Gastrocnemius medialis (tissue), 4 donors: ENCODE measurements at regions of chr17 and their contacts with region 1.

Region 1: GRCh38 chr17:42405963-42406495 is 17.0 kb downstream of the CAVIN1 start:
- DNase-seq: peak; percentile 65 to 82
- ATAC-seq: peak; percentile 36 to 48
- H3K4me3 ChIP-seq: no peak overlapping the region
- H3K27ac ChIP-seq: peak overlapping the region; percentile 89 to 100 (median 95)
- H3K4me1 ChIP-seq: peaks cover 54 to 60% of the 10 kb centered on the region in 2 donors
- H3K27me3 ChIP-seq: no peaks in the 10 kb centered on the region
- CTCF ChIP-seq: peak; percentile 90 to 95 (median 93)
- POLR2A ChIP-seq: no peak

Region 2: DNA sequence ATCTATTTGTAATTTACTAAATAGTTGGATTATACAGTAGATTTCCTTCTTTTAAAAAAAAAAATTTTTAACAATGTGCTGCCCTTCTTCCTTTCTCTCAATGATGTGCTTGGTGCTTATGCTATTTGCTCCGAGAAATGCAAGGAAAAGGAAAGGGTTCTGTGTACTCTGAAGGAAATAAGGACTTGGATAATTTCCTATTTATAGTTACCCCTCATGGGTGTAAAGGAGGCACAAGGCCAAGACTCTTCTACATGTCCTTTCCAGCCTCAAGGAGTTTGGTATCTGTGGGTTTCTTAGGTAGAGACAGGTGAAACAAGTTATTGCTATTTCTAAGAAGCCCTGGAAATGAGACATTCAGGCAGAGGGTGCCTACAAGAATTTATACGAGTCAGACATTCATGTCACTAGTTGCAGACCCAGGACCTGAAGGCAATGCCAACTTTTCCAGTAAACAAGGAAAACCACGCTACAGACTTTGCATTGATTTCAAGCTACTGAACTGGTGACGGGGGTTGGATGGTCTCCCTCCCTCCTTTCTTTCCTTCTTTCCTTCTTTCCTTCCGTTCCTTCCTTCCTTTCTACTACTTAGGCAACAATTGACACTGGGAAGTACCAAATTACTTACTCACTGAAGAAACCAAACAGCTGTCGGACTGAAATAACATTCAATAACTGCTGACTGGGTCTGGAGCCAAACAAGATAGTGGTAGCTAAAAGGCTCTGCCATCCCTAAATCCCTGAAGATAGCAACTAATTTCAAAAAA is 178.0 kb before region 1 on chr17:
- in situ Hi-C with region 1: no loop called
- intact Hi-C with region 1: loop called (anchors 1 kb)
- DNase-seq: peak; percentile 34
- ATAC-seq: peak; percentile 92 to 93
- H3K4me3 ChIP-seq: peak overlapping the region in 3 of 4 donors; percentile 3 to 11 (median 7)
- H3K27ac ChIP-seq: peak overlapping the region; percentile 81 to 88 (median 84)
- H3K4me1 ChIP-seq: peaks cover 33 to 39% of the 10 kb centered on the region in 2 donors
- H3K27me3 ChIP-seq: no peaks in the 10 kb centered on the region
- CTCF ChIP-seq: no peak
- POLR2A ChIP-seq: no peak

Region 3: DNA sequence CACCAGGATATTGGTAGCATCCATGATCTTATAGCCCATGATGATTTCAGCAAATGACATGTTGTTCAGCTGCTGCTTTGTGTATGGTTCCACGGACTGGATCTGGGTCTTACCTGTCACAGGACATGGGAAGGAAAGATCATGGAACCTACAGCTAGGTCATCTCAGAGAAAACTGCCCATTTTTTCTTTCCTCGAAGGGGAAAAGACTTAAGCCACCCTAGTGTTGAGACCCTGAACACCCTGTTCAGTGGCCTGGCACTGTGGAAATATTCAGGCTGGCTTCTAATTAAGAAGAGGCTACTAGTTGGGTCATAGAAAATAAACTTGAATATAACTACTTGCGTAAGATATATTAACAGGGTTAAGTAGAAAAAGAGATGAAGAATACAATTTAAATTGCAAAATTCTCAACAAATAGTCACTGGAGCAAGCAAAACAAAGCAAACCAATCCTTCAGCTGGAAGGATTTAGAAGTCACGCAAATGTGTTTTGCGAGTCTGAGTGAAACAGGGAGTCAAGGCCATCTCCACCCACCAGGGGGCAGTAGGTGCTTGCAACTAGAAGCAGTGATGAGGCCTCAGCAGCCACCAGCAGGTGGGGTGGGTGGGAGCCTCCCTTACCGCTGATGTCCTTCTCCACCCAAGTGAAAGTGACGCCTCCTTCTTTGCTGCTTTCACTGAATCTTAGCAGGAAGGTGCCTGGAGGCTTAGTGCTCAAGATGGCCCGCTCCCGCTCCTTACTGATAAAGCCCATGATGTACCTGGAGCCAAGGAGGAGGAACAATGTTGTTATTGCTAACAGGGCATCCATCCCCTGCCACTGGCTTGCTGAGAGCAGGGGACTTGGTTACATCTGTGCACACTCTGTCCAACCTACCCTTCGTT is 83.4 kb before region 1 on chr17:
- in situ Hi-C with region 1: loop called (anchors 5 kb)
- intact Hi-C with region 1: loop called (anchors 1 kb)
- DNase-seq: peak; percentile 85 to 93
- ATAC-seq: peak; percentile 77 to 79
- H3K4me3 ChIP-seq: no peak overlapping the region
- H3K27ac ChIP-seq: peak overlapping the region; percentile 1 to 49 (median 44)
- H3K4me1 ChIP-seq: peaks cover 8 to 22% of the 10 kb centered on the region in 2 donors
- H3K27me3 ChIP-seq: no peaks in the 10 kb centered on the region
- CTCF ChIP-seq: peak; percentile 98 to 100 (median 99)
- POLR2A ChIP-seq: no peak

Region 4: DNA sequence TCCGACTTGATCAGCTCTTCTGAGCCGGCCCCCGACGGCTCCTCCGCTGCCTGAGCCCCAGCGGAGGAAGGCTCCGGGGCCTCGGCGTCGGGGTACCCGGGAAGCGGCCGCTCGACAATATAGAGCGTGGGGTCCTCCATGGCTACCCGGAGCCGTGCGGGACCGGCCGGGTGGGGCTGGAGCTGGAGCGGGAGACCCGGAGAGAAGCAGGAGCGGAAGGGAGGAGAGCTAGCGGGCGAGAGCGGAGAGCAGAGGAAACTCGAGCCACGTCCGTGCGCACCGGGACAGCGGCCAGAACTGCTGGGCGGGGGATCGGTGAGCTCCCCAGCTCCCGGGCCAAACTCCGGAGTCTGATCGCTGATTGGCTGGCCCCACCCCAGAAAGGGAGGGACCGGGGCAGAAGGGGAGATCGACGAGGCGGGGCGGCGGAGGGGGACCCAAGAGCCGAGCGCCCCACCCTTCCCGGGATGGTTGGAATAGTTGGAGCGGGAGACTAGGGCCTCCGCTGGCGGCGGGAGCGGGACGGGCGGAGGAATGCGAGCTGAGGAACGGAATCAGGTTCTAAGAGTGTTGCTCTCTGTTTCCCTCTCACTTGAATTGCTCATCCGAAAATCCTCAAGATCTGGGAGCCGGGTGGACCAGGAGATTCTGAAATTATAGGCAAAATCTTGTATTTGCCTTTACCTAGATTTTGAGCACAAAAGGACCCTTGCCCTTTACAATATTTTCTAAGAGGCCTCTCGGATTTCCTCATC is 17.1 kb after region 1 on chr17 and contains the start of gene CAVIN1:
- in situ Hi-C with region 1: no loop called
- intact Hi-C with region 1: loop called (anchors 2 kb)
- DNase-seq: peak; percentile 99 to 100
- ATAC-seq: peak; percentile 80 to 88
- H3K4me3 ChIP-seq: peak within 1 kb of the TSS; percentile 87 to 99 (median 95)
- H3K27ac ChIP-seq: peak within 1 kb of the TSS; percentile 96 to 100 (median 98)
- H3K4me1 ChIP-seq: peaks cover 30 to 35% of the 10 kb centered on the region in 2 donors
- H3K27me3 ChIP-seq: no peaks in the 10 kb centered on the region
- CTCF ChIP-seq: peak in 1 of 5 experiments; percentile 8
- POLR2A ChIP-seq: peak; percentile 92 to 95
- total RNA-seq, gene CAVIN1: 64.9 to 137 (median 125) TPM

Region 5: GRCh38 chr17:42517516-42517915 is 111.5 kb after region 1 on chr17:
- in situ Hi-C with region 1: loop called in 1 of 4 experiments (anchors 10 kb)
- intact Hi-C with region 1: loop called (anchors 5 kb)
- DNase-seq: peak; percentile 54 to 81
- ATAC-seq: peak; percentile 14 to 24
- H3K4me3 ChIP-seq: no peak overlapping the region
- H3K27ac ChIP-seq: peak overlapping the region; percentile 77 to 89 (median 86)
- H3K4me1 ChIP-seq: peaks cover 57 to 65% of the 10 kb centered on the region in 2 donors
- H3K27me3 ChIP-seq: no peaks in the 10 kb centered on the region
- CTCF ChIP-seq: peak; percentile 69 to 88 (median 85)
- POLR2A ChIP-seq: no peak